AG04450 (cell line): ENCODE measurements at regions of chr3 and their contacts with region 1.

Region 1: GRCh38 chr3:108914774-108915641 is 38.7 kb downstream of the GUCA1C start:
- DNase-seq: peak; percentile 32
- H3K4me3 ChIP-seq: no peak overlapping the region
- H3K27ac ChIP-seq: no peak overlapping the region
- H3K27me3 ChIP-seq: no peaks in the 10 kb centered on the region
- CTCF ChIP-seq: peak; percentile 92

Region 2: GRCh38 chr3:108662130-108662738 is 252.8 kb before region 1 on chr3:
- CTCF ChIA-PET with region 1: interaction called, 184 read pairs
- POLR2A ChIA-PET with region 1: no interaction called
- DNase-seq: peak; percentile 63
- H3K4me3 ChIP-seq: no peak overlapping the region
- H3K27ac ChIP-seq: no peak overlapping the region
- H3K27me3 ChIP-seq: no peaks in the 10 kb centered on the region
- CTCF ChIP-seq: peak; percentile 72

Region 3: DNA sequence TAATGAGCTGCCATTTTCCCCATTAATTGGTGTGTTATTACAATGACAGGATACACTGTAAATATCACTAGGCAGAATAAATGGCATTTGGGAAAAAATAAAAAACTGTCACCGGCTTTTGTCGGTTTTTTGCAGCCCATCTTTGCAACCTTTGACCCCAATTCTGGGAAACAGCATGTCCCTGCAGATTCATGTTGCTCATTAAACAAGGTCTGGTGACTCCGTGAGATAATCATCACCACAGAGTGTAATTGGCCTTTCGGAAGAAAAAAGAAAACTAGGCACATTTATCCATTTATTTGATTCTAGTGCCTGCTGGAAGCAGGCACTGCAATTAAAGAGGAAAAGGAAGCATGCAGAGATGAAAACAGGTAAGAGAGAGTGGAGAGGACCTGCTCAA is 27.9 kb before region 1 on chr3:
- CTCF ChIA-PET with region 1: interaction called, 12 read pairs
- POLR2A ChIA-PET with region 1: no interaction called
- DNase-seq: no peak
- H3K4me3 ChIP-seq: no peak overlapping the region
- H3K27ac ChIP-seq: no peak overlapping the region
- H3K27me3 ChIP-seq: no peaks in the 10 kb centered on the region
- CTCF ChIP-seq: no peak

Region 4: GRCh38 chr3:108931035-108931434 is 16.0 kb after region 1 on chr3:
- CTCF ChIA-PET with region 1: interaction called, 11 read pairs
- POLR2A ChIA-PET with region 1: no interaction called
- DNase-seq: no peak
- H3K4me3 ChIP-seq: no peak overlapping the region
- H3K27ac ChIP-seq: no peak overlapping the region
- H3K27me3 ChIP-seq: no peaks in the 10 kb centered on the region
- CTCF ChIP-seq: no peak